GM12878 (cell line): ENCODE measurements at regions of chr20 and their contacts with region 1.

Region 1: DNA sequence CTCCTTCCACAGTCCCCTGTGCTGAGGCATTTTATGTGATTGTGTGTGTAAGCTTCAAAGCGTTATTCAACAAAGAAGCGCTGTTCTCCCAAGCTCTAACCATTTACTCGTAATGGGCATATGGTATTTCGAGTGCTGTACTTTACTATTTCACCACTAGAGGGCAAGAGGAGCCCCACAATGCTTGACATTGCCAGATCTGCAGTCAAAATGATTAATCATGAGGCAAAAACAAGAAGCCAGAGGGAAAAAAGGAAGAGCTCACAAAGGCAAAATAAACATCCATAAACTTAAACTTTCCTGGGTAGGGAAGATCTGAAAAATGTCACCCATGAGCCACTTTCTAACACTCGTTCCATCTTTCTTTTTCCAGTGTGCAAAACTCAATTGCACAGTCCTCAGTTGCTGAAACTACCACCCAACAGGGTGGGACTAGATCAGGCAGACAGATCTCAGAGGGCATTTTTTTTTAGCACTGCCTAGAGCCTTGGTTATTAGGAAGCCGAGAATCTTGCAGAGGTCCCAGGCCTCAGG is 215.0 kb upstream of the PLCB4 start:
- DNase-seq: peak; percentile 5
- ATAC-seq: peak; percentile 92
- H3K4me3 ChIP-seq: no peak overlapping the region
- H3K27ac ChIP-seq: no peak overlapping the region
- H3K4me1 ChIP-seq: no peaks in the 10 kb centered on the region
- H3K27me3 ChIP-seq: no peaks in the 10 kb centered on the region
- CTCF ChIP-seq: peak; percentile 78 to 86 (median 80)
- EP300 ChIP-seq: no peak
- POLR2A ChIP-seq: no peak
- RAD21 ChIP-seq: peak; percentile 68

Region 2: GRCh38 chr20:8187740-8188139 is 666.1 kb before region 1 on chr20:
- CTCF ChIA-PET with region 1: no interaction called
- POLR2A ChIA-PET with region 1: no interaction called
- RAD21 ChIA-PET with region 1: no interaction called
- SMC1A ChIA-PET with region 1: no interaction called
- in situ Hi-C with region 1: no loop called
- intact Hi-C with region 1: no loop called
- DNase-seq: no peak
- ATAC-seq: no peak
- H3K4me3 ChIP-seq: no peak overlapping the region
- H3K27ac ChIP-seq: no peak overlapping the region
- H3K4me1 ChIP-seq: no peaks in the 10 kb centered on the region
- H3K27me3 ChIP-seq: no peaks in the 10 kb centered on the region
- CTCF ChIP-seq: no peak
- EP300 ChIP-seq: no peak
- POLR2A ChIP-seq: no peak
- RAD21 ChIP-seq: no peak

Region 3: GRCh38 chr20:9172851-9173250 is 319.0 kb after region 1 on chr20:
- CTCF ChIA-PET with region 1: no interaction called
- POLR2A ChIA-PET with region 1: no interaction called
- RAD21 ChIA-PET with region 1: no interaction called
- SMC1A ChIA-PET with region 1: no interaction called
- in situ Hi-C with region 1: no loop called
- intact Hi-C with region 1: loop called (anchors 10 kb)
- DNase-seq: no peak
- ATAC-seq: no peak
- H3K4me3 ChIP-seq: no peak overlapping the region
- H3K27ac ChIP-seq: no peak overlapping the region
- H3K4me1 ChIP-seq: no peaks in the 10 kb centered on the region
- H3K27me3 ChIP-seq: no peaks in the 10 kb centered on the region; a peak in 1 of 4 replicates
- CTCF ChIP-seq: no peak
- EP300 ChIP-seq: no peak
- POLR2A ChIP-seq: no peak
- RAD21 ChIP-seq: no peak